Calu3 (cell line): ENCODE measurements at regions of chr1 and their contacts with region 1.

Region 1: GRCh38 chr1:209576798-209577197 is 6.7 kb upstream of the CAMK1G start:
- DNase-seq: peak; percentile 93
- H3K4me3 Mint-ChIP-seq: no peak overlapping the region
- H3K27ac Mint-ChIP-seq: no peak overlapping the region
- H3K4me1 Mint-ChIP-seq: peaks cover 7% of the 10 kb centered on the region
- H3K27me3 Mint-ChIP-seq: peaks cover 48% of the 10 kb centered on the region
- CTCF ChIP-seq: peak; percentile 91

Region 2: DNA sequence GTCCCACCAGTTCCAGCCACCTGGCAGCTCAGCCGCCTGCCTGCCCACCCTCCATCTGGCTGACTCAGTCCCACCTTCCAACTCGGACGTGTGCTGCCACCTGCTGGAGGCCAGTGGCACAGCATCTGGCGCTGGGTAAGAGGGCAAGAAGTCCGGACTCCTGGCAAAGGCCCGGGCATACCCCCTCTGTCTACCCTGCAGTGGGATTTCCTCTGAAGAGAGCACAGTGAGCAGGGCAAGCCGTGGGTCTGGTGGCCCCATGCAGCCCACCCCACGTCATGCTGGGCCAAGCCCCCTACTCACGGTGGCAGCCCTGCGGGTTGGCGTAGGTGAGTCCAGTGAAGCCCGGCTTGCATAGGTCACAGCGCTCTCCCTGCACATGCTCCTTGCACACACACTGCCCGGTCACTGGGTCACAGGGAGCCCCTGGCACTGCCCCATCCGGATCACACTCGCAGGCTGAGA is 51.0 kb after region 1 on chr1:
- CTCF ChIA-PET with region 1: no interaction called
- intact Hi-C with region 1: loop called (anchors 5 kb)
- DNase-seq: peak; percentile 82
- H3K4me3 Mint-ChIP-seq: no peak overlapping the region
- H3K27ac Mint-ChIP-seq: peak overlapping the region; percentile 34
- H3K4me1 Mint-ChIP-seq: no peaks in the 10 kb centered on the region
- H3K27me3 Mint-ChIP-seq: no peaks in the 10 kb centered on the region
- CTCF ChIP-seq: peak; percentile 88

Region 3: DNA sequence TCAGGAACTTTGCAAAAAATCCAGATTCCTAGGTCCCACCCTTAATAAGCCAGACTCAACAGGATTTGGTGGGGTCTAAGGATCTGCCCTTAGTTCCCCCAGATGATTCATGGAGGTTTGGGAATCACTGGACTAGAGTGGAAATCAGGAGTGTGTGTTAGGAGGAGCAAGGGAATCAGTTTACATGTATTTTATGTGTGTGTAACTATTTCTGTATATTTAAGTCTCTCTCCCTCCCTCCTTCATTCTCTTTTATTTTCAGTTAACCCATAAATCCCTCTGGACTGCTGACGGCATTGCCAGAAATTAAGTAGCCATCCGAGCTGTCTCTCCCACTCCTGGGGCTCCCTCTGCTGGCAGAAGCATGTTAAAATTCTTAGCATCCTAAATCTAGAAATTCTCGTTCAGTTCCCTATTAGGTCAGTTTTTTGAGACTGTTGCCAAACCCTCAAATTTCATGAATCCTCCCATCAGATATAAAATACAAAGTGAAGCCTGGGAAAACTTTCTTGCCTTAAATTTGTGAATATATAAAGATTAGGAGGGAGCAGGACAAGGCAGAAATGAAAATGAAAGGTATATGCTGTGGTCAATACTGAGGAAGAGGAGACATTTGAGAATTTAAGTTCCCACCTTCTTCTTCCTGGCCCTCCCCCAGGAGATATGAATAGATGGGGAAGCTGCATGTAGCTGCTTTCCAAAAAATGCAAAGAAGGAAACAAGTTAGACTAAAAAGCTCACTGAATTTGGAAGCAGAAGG is 116.1 kb after region 1 on chr1:
- CTCF ChIA-PET with region 1: no interaction called
- intact Hi-C with region 1: loop called (anchors 1 kb)
- DNase-seq: peak; percentile 90
- H3K4me3 Mint-ChIP-seq: no peak overlapping the region
- H3K27ac Mint-ChIP-seq: peak overlapping the region; percentile 76
- H3K4me1 Mint-ChIP-seq: peaks cover 35% of the 10 kb centered on the region
- H3K27me3 Mint-ChIP-seq: peaks cover 20% of the 10 kb centered on the region
- CTCF ChIP-seq: peak; percentile 81